ENCODE measurements at regions of chr17 and their contacts with region 1.

Region 1: DNA sequence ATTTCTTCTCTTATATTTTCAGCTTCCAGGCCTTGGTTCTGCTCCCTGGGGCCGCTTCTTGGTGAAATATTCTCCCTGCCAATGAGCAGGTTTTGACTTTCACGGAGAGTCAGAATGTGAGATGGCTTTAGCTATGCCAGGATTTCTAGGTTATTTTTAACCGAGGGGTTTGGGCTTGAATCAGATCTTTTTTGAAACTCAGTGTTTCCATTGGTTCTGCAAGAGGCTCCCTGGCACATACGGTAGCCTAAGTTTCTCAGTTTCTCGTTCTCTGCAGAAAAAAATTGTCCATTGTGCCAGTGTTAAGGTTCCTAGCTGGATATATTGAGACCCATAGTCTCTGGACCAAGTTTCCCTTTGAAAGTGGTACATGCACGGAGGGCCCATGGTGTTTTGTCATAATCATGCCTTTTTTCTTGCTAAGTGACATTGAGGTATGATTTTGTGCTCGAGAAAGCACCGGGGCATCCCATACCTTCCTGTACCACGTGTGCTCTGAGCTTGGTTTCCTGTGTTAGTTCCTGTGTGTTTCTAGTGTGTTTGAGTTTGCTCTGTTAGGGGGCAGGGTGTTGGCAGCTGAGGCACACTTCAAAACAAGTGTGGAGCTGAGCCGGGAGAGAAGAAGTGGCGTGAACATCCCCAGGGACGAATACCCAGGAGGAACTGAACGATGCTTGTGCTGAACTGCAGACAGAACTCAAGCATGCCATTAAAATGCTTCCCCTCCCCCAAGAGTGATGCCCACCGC is 127.2 kb downstream of the HS3ST3B1 start:
- DNase-seq: peak; percentile 85
- H3K4me3 Mint-ChIP-seq: peak overlapping the region; percentile 63
- H3K27ac Mint-ChIP-seq: peak overlapping the region; percentile 81
- H3K4me1 Mint-ChIP-seq: peaks cover 33% of the 10 kb centered on the region
- H3K27me3 Mint-ChIP-seq: no peaks in the 10 kb centered on the region

Region 2: DNA sequence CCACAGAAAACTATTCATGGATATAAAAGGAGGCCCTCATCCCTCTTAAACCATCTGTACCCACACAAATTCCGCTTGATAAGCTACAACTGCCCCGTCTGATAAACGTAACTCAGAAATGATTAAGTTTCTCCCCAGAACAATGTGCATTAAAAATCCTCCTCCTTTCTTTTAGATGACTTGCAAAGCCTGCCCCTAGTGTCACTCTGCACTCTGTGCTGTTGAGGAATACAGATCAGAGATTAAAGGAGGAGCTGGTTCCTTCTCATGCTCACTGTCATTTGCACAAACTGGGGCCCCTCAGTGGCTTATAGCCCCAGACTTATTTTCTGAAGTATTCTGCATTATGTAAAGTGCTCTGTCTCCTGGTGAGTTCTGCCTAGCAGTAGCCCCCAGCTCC is 224.7 kb before region 1 on chr17:
- intact Hi-C with region 1: loop called (anchors 5 kb)
- DNase-seq: peak; percentile 82
- H3K4me3 Mint-ChIP-seq: peak overlapping the region; percentile 52
- H3K27ac Mint-ChIP-seq: peak overlapping the region; percentile 81
- H3K4me1 Mint-ChIP-seq: peaks cover 76% of the 10 kb centered on the region
- H3K27me3 Mint-ChIP-seq: no peaks in the 10 kb centered on the region

Region 3: GRCh38 chr17:14389681-14390080 is 38.4 kb before region 1 on chr17:
- intact Hi-C with region 1: loop called (anchors 5 kb)
- DNase-seq: no peak
- H3K4me3 Mint-ChIP-seq: no peak overlapping the region
- H3K27ac Mint-ChIP-seq: no peak overlapping the region
- H3K4me1 Mint-ChIP-seq: no peaks in the 10 kb centered on the region
- H3K27me3 Mint-ChIP-seq: peaks cover 3% of the 10 kb centered on the region

Region 4: DNA sequence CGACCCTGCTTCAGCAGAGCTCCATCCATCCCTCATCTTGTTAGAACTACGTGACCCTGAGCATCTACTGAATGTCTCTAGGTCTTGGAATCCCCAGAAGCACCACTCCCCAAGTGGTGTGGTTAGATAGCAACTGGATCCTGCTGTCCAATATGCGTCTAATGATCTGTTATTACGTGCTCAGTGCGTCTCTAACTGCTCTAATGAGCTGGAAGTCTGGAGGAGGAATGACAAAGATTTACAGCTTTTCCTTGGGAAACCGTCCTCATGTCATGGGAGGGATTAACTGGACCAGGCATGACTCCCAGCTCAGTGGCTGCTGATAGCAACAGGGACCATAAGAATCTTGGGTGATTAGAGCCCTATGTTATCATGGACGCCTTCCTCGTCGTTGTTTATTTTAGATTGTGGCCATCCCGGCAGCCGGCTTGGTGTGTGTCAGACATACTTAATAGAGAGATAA is 23.7 kb after region 1 on chr17:
- intact Hi-C with region 1: no loop called
- DNase-seq: no peak
- H3K4me3 Mint-ChIP-seq: no peak overlapping the region
- H3K27ac Mint-ChIP-seq: no peak overlapping the region
- H3K4me1 Mint-ChIP-seq: no peaks in the 10 kb centered on the region
- H3K27me3 Mint-ChIP-seq: no peaks in the 10 kb centered on the region

Region 5: GRCh38 chr17:14622615-14623101 is 194.6 kb after region 1 on chr17:
- intact Hi-C with region 1: no loop called
- DNase-seq: no peak
- H3K4me3 Mint-ChIP-seq: no peak overlapping the region
- H3K27ac Mint-ChIP-seq: no peak overlapping the region
- H3K4me1 Mint-ChIP-seq: no peaks in the 10 kb centered on the region
- H3K27me3 Mint-ChIP-seq: no peaks in the 10 kb centered on the region

Measured in activated CD4-positive, alpha-beta T cell treated with anti-CD3 and anti-CD28 coated beads, Interleukin-2, amount 10 ng/mL, durations not matched to agents 24 days and 14 days (primary cell).